Activated T-helper 2 cell treated with anti-CD3 and anti-CD28 coated beads, Interferon-gamma antibody, Interleukin-2, Interleukin-4, amounts not matched to agents 10 μg/mL and 5 μg/mL and 100 μg/mL, durations not matched to agents 14 hours and 24 hours and 36 hours (primary cell): ENCODE measurements at regions of chr3 and their contacts with region 1.

Region 1: GRCh38 chr3:113531826-113532697 is at the start of gene SIDT1:
- DNase-seq: peak; percentile 68
- H3K4me3 Mint-ChIP-seq: peak within 1 kb of the TSS; percentile 91
- H3K27ac Mint-ChIP-seq: peak within 1 kb of the TSS; percentile 95
- H3K4me1 Mint-ChIP-seq: peaks cover 53% of the 10 kb centered on the region
- H3K27me3 Mint-ChIP-seq: peaks cover 19% of the 10 kb centered on the region
- total RNA-seq, gene SIDT1: 10.2 and 11.7 TPM in 2 replicates

Region 2: GRCh38 chr3:113495035-113495434 is 37.0 kb before region 1 on chr3:
- intact Hi-C with region 1: loop called (anchors 5 kb)
- DNase-seq: no peak
- H3K4me3 Mint-ChIP-seq: no peak overlapping the region
- H3K27ac Mint-ChIP-seq: no peak overlapping the region
- H3K4me1 Mint-ChIP-seq: no peaks in the 10 kb centered on the region
- H3K27me3 Mint-ChIP-seq: no peaks in the 10 kb centered on the region

Region 3: DNA sequence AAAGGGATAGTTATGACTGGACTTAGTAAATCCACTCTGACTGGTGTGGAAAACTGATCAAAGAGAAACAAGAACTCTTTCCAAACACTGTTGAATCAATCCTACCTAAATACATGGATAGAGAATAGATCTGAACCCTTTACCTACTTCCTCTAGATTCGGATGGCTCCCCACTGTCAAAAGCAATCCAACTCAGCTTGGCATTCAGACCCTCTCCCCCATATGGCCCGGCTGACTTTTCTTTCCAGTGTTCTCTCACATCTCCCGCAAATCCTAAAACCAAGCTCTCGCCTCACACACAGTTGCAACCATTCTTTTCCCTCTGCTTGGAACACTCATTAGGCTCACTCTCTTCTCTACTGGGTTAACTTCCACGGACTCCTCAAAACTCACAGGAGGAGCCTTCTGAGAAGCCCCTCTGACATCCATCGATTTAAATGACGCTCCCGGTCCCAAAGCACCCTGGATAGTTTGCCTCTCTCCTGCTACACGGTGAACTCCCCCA is 17.7 kb before region 1 on chr3:
- intact Hi-C with region 1: loop called (anchors 1 kb)
- DNase-seq: no peak
- H3K4me3 Mint-ChIP-seq: no peak overlapping the region
- H3K27ac Mint-ChIP-seq: no peak overlapping the region
- H3K4me1 Mint-ChIP-seq: peaks cover 7% of the 10 kb centered on the region
- H3K27me3 Mint-ChIP-seq: peaks cover 19% of the 10 kb centered on the region

Region 4: DNA sequence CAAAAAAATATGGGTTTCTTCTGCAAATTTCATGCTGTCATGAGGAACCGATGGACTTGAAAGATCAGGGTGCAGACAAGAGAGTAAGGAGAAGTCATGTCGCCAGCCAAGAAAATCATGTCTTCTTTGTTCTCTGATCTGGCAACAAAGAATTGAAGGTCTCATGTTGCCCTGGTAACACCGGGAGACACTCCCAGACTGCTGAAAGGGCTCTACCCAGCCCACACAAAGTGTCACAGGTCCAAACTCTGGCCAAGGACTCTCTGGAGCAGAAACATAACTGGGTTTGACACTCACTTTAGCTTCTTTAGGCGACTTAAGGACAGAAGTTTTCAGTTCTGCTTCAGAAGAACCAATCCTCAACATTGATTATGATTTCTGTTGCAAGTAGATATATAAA is 43.1 kb after region 1 on chr3:
- intact Hi-C with region 1: loop called (anchors 5 kb)
- DNase-seq: no peak
- H3K4me3 Mint-ChIP-seq: no peak overlapping the region
- H3K27ac Mint-ChIP-seq: no peak overlapping the region
- H3K4me1 Mint-ChIP-seq: peaks cover 3% of the 10 kb centered on the region
- H3K27me3 Mint-ChIP-seq: no peaks in the 10 kb centered on the region

Region 5: DNA sequence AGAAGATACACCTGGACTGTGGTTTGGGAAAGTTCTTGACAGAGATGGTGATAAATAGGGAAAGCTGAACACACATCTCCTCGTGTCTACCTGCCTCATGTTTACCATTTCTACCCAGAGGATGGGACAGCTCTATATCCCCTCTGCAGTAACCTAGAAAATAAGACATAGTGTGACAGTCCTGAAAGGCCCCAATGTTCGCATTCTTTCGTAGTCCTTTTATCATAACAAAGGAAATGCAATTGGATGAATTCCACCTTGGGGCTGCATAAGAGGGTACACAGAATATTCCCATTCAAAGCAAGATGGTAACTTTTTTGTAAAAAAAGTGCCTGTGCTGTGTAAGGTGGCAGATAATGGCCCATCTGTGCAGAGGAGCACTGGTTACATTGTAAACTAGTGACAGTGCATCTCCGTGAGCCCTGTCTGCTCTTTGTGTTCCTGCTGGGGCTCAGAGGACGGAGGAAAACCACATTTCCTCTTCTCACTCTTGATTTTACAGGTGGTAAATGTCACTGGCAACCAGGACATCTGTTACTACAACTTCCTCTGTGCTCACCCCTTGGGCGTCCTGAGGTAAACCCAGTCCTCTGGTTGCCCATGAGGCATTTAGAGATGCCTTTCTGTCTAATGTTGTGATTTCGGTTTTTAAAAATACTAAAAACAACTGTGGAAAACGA is 74.6 kb after region 1 on chr3:
- intact Hi-C with region 1: loop called (anchors 1 kb)
- DNase-seq: peak; percentile 39
- H3K4me3 Mint-ChIP-seq: peak overlapping the region; percentile 33
- H3K27ac Mint-ChIP-seq: peak overlapping the region; percentile 60
- H3K4me1 Mint-ChIP-seq: peaks cover 24% of the 10 kb centered on the region
- H3K27me3 Mint-ChIP-seq: no peaks in the 10 kb centered on the region

Region 6: DNA sequence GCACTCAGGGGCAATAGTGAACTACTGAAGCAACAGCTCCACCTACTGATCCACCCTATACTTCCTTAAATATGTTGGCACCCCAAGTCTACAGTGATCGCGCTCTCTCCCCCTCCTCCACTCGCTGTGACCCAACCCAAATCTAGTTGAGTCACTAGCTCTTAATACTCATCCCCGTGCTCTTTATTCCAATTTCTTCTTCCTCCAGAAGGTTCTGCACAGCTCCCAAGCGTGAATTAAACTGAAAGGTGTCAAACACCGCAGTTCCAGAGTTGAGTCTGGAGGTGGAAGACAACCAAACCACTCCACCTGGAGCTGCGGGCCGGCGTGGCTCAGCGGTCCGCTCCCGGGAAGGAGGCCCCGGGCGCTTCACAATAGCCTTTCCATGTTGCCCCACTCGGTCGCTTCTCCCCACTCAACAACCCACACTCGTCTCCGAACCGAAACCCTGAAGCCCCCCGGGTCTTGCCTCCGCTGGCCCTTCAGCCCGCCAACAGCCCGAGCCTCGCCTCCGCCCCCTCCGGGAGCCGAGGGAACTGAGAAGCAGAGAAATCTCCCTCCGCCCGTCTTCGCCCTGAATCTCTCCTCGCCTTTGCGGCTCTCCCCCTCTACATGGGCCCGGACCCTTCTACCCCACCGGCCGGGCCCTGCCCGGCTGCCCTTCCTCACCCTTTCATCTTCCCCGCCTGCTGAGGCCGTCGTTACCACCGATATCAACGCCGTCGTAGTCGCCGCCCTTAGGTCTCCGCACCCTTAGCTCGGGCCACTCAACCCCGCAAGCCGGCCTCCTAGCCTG is 213.4 kb after region 1 on chr3:
- intact Hi-C with region 1: loop called (anchors 1 kb)
- DNase-seq: peak; percentile 73
- H3K4me3 Mint-ChIP-seq: peak overlapping the region; percentile 96
- H3K27ac Mint-ChIP-seq: peak overlapping the region; percentile 100
- H3K4me1 Mint-ChIP-seq: peaks cover 64% of the 10 kb centered on the region
- H3K27me3 Mint-ChIP-seq: peaks cover 3% of the 10 kb centered on the region